AG04449 (cell line): ENCODE measurements at regions of chr5 and their contacts with region 1.

Region 1: GRCh38 chr5:60295423-60295822 is 401.9 kb upstream of the PDE4D start:
- DNase-seq: no peak
- H3K4me3 ChIP-seq: no peak overlapping the region
- CTCF ChIP-seq: peak; percentile 66

Region 2: GRCh38 chr5:60382716-60383115 is 87.3 kb after region 1 on chr5:
- CTCF ChIA-PET with region 1: interaction called, 32 read pairs
- POLR2A ChIA-PET with region 1: no interaction called
- DNase-seq: no peak
- H3K4me3 ChIP-seq: no peak overlapping the region
- CTCF ChIP-seq: peak; percentile 33